Activated T-helper 1 cell treated with anti-CD3 and anti-CD28 coated beads, Interleukin-12 subunit alpha, Interleukin-12 subunit beta, Interleukin-2, Interleukin-4 antibody, amounts not matched to agents 30 ng/mL and 10 ng/mL and 1 ng/mL, durations not matched to agents 14 hours and 24 hours and 36 hours (primary cell): ENCODE measurements at regions of chr6 and their contacts with region 1.

Region 1: DNA sequence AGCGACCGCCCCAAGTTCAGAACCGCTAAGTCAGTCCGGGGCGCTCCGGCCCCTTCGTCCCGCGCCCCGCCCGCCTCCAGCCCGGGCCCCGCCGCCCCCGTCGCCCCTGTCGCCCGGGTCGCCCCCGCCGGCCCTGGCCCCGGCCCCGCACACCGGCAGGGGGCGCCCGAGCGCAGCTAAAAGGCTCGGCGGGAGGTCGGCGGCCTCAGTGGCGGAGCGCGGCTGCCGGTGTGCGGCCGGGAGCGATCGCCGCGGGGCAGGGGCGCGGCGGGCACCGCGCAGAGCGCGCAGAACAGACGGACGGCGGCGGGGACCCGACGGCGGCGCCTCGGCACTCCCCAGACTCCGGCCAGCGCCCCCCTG is at the start of gene FNDC1:
- DNase-seq: peak; percentile 23
- H3K4me3 Mint-ChIP-seq: peak within 1 kb of the TSS; percentile 64
- H3K27ac Mint-ChIP-seq: no peak within 1 kb of the TSS
- H3K4me1 Mint-ChIP-seq: peaks cover 14% of the 10 kb centered on the region
- H3K27me3 Mint-ChIP-seq: peaks cover 81% of the 10 kb centered on the region
- total RNA-seq, gene FNDC1: 0.02 TPM in 1 of 2 replicates, not detected in the other

Region 2: GRCh38 chr6:158926416-158926815 is 242.8 kb before region 1 on chr6:
- intact Hi-C with region 1: no loop called
- DNase-seq: no peak
- H3K4me3 Mint-ChIP-seq: no peak overlapping the region
- H3K27ac Mint-ChIP-seq: no peak overlapping the region
- H3K4me1 Mint-ChIP-seq: no peaks in the 10 kb centered on the region
- H3K27me3 Mint-ChIP-seq: no peaks in the 10 kb centered on the region

Region 3: DNA sequence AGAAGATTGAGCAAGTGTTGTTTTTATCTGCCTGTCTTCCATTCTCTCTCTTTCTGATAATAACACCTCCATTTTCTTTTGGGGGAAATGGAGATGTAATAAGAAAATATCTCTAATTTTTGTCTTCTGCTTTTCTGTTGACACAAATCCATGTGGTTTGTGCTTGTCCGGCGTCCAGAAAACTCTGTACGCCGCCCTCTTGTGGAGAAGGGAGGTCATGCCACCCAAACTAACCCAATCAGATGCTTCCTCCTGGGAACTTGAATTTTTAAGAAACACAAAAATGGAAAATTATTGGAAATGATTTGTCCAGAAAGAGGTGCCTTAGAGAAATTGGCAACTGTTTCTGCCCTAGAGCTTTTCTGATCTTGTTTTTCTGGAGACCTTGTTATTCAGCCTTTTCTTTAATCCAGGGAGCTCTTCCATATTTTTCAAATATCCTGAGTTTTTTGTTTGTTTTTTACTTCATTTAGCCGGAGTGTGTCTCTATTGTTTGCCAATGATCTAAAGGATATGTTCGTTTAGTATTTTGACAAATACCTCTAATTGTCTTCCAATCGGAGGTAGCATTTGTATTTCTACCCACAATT is 17.8 kb before region 1 on chr6:
- intact Hi-C with region 1: loop called (anchors 2 kb)
- DNase-seq: no peak
- H3K4me3 Mint-ChIP-seq: no peak overlapping the region
- H3K27ac Mint-ChIP-seq: no peak overlapping the region
- H3K4me1 Mint-ChIP-seq: no peaks in the 10 kb centered on the region
- H3K27me3 Mint-ChIP-seq: peaks cover 23% of the 10 kb centered on the region

Region 4: GRCh38 chr6:159487636-159488035 is 318.5 kb after region 1 on chr6:
- intact Hi-C with region 1: no loop called
- DNase-seq: no peak
- H3K4me3 Mint-ChIP-seq: no peak overlapping the region
- H3K27ac Mint-ChIP-seq: no peak overlapping the region
- H3K4me1 Mint-ChIP-seq: no peaks in the 10 kb centered on the region
- H3K27me3 Mint-ChIP-seq: peaks cover 3% of the 10 kb centered on the region